ENCODE measurements at regions of chr13 and their contacts with region 1.

Region 1: DNA sequence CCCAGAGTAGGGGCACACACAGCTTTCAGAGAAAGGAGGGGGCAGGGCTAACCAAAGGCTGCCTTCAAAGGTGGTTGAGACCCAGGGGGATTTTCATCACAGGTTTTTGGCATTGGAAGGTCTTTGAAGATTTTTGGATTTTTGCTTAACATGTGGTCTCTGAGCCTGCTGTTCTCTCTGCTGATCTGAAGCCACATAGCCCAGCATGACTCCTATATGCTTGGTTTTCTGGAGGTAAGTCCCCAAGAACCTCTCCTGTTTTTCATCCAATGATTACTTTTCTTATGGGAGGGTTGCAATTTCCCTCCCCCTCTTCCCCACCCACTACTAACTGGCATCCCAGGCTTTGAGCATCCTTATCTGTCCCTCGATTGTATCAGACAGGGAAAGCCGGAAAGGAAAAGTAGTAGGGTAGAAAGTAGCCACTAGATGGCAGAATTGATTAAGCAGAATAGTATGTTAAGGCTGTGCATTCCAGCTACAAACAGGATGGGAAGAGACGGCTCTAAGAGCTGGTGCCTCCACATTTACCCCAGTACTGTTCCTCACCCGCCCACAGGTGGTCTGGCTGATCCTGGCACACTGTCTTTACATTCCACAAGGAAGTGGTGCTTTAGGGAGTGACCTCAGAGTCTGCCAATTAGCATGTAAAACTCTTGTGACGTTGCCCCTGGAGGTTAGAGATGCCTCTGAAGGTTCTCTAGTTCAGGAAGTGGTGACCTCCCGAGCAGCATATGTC is 218.9 kb upstream of the EDNRB start:
- H3K4me3 Mint-ChIP-seq: peak overlapping the region; percentile 37
- H3K27ac Mint-ChIP-seq: no peak overlapping the region
- H3K4me1 Mint-ChIP-seq: peaks cover 6% of the 10 kb centered on the region
- H3K27me3 Mint-ChIP-seq: no peaks in the 10 kb centered on the region

Region 2: DNA sequence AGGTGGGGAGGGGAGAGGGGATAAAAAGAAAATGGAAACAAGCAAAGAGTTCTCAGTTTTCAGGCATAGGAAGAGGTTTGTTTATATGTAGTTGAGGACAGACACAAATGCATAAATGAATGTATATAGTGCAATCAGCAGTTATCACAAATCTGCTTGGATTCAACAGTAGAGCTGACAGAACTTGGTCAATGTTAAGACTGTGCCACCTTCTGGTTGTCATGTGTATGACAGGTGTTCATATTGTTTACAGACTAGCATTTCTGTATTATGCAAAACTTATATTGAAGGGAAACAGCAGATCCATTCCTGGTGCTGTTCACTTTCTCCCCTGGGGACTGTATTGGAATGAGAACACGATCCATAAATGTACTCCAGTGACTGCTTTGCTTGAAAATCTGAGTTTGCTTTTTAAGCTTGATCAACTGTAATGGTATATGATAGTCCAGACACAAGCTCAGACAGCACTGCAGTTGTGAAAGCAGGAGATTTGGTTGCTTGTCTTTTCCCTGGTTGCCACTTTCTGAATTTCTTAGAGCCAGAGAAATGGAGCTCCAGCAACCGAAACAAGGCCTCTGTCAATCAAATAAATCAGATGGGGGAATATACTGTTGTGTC is 840.9 kb after region 1 on chr13:
- intact Hi-C with region 1: loop called (anchors 1 kb)
- H3K4me3 Mint-ChIP-seq: no peak overlapping the region
- H3K27ac Mint-ChIP-seq: no peak overlapping the region
- H3K4me1 Mint-ChIP-seq: no peaks in the 10 kb centered on the region
- H3K27me3 Mint-ChIP-seq: peaks cover 7% of the 10 kb centered on the region

Region 3: GRCh38 chr13:79246578-79246949 is 1109.0 kb after region 1 on chr13:
- intact Hi-C with region 1: loop called (anchors 5 kb)
- H3K4me3 Mint-ChIP-seq: no peak overlapping the region
- H3K27ac Mint-ChIP-seq: no peak overlapping the region
- H3K4me1 Mint-ChIP-seq: no peaks in the 10 kb centered on the region
- H3K27me3 Mint-ChIP-seq: no peaks in the 10 kb centered on the region

Region 4: GRCh38 chr13:79541426-79542049 is 1404.0 kb after region 1 on chr13:
- intact Hi-C with region 1: loop called (anchors 2 kb)
- H3K4me3 Mint-ChIP-seq: no peak overlapping the region
- H3K27ac Mint-ChIP-seq: no peak overlapping the region
- H3K4me1 Mint-ChIP-seq: no peaks in the 10 kb centered on the region
- H3K27me3 Mint-ChIP-seq: no peaks in the 10 kb centered on the region